ENCODE measurements at regions of chr19 and their contacts with region 1.

Region 1: DNA sequence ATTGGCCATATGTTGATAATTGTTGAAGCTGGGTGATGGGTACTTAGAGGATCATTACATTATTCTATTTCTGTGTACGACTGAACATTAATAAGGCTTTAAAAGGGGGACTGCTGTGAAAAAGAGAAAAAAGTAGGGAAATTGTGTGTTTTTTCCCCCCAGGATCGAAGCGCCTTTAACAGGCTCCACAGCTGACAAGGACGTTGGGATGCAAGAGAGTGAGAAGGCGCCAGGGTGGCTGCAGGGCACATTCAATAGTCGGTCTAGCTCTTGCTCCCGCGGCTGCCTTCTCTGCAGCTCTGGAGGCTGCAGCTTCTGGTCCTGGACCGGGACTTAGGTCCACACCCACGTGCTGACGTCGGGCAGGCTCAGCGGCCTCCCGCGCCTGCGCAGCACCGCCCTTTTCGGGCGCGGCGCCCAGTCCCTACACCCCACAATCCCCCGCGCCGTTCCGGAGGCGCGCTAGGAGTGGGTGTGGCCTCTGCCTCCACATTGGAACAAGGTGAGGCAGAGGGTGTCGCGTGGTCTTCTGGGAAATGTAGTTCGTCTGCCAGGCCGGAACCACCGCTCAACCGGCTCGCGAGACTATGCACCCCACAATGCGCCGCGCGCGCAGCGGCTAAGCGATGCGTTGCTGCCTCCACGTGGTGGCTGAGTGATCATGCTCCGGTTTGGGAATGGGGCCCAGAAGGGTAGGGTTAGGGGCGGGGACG is 4.9 kb upstream of the LRFN3 start:
- DNase-seq: peak; percentile 100
- H3K4me3 Mint-ChIP-seq: peak overlapping the region; percentile 70
- H3K27ac Mint-ChIP-seq: peak overlapping the region; percentile 81
- H3K4me1 Mint-ChIP-seq: peaks cover 30% of the 10 kb centered on the region
- H3K27me3 Mint-ChIP-seq: no peaks in the 10 kb centered on the region

Region 2: GRCh38 chr19:35693830-35694599 is 237.3 kb before region 1 on chr19:
- intact Hi-C with region 1: loop called (anchors 1 kb)
- DNase-seq: peak; percentile 86
- H3K4me3 Mint-ChIP-seq: no peak overlapping the region
- H3K27ac Mint-ChIP-seq: peak overlapping the region; percentile 38
- H3K4me1 Mint-ChIP-seq: peaks cover 27% of the 10 kb centered on the region
- H3K27me3 Mint-ChIP-seq: no peaks in the 10 kb centered on the region

Region 3: DNA sequence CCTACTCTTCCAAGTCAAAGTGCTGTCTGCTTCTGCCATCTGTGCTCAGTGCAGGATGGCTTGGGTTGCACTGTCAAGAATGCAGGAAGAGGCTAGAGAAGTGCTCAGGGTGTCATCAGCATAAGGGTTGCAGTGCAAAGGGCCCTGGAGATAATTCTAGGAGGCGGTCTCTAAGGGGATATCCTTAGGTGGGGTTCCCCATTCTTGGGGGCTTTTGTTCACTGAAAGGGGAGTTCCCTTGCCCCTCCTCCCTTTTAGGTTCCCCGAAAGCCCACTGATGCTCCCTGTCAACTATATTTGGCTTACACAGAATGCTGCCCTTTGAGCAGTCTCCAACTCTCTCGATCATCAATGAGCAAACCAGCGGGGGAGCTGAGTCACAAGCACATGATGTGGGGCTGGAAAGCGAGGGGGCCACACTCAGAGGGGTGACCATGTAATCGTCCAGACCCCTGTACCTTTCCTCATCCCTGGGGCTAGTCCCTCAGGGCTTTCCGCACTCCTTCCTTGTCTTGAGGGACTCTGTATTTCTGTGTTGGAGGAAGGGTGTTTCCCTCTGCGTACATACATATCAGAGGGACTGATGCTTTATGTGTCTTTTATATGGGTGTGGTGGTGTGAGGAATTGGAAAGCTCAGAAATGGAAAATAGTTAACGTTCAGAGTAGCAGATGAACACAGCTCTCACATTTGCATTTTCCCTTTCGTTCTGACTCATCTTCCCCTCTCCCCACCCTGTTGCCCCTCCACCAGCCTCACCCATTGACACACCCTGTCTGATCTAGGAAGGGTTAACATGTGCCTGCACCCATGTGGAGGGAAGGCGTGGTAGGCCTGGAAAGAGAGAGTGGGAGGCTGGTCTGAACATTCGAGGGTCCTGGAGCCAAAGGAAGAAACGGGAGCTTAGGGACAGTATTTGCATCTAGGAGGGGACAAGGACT is 220.3 kb before region 1 on chr19:
- intact Hi-C with region 1: loop called (anchors 1 kb)
- DNase-seq: peak; percentile 63
- H3K4me3 Mint-ChIP-seq: peak overlapping the region; percentile 63
- H3K27ac Mint-ChIP-seq: peak overlapping the region; percentile 95
- H3K4me1 Mint-ChIP-seq: peaks cover 46% of the 10 kb centered on the region
- H3K27me3 Mint-ChIP-seq: no peaks in the 10 kb centered on the region

Region 4: DNA sequence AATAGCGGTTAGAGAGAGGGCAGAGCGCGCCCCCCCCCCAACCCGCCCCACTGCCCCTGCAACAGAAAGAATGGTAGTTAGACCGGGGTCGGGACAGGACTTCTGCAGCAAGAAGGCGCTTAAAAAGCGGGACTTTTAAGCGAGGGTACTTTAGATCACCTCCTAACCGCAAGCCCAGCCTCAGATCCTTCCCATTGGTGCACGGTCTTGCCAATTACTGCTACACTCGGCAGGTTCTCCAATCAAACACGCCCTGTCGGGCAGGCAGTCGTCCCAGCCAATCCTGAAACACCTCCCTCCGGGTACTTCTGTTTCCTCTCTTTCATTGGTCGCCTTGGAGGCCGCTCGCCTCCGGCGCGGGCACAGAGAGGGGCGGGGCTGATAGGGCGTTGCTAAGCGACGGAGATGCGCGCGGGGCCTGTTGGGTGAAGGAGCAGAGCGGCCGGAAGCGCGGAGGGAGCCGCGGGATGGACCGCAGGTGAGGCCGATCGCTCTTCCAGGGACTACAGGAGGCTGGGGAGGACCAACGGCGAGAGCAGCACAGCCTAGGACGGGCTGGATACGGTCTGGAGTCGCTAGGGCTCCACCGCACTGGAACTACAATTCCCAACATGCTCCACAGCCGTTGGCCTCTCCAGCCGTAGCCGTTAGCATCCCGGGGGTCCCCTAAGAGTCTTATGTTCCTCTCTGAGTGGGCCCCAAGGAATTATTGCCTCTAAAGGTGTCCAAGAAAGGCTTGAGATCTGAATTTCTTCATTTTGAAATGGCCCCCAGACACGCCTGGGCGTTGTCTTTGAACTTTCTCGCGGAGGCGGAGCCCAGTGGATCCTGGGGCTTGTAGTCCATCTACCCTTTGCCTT is 173.3 kb before region 1 on chr19 and contains the start of gene PROSER3:
- intact Hi-C with region 1: loop called (anchors 1 kb)
- DNase-seq: peak; percentile 99
- H3K4me3 Mint-ChIP-seq: peak within 1 kb of the TSS; percentile 89
- H3K27ac Mint-ChIP-seq: peak within 1 kb of the TSS; percentile 90
- H3K4me1 Mint-ChIP-seq: peaks cover 29% of the 10 kb centered on the region
- H3K27me3 Mint-ChIP-seq: no peaks in the 10 kb centered on the region
- total RNA-seq, gene PROSER3: 39.5 and 45.1 TPM in 2 replicates

Region 5: DNA sequence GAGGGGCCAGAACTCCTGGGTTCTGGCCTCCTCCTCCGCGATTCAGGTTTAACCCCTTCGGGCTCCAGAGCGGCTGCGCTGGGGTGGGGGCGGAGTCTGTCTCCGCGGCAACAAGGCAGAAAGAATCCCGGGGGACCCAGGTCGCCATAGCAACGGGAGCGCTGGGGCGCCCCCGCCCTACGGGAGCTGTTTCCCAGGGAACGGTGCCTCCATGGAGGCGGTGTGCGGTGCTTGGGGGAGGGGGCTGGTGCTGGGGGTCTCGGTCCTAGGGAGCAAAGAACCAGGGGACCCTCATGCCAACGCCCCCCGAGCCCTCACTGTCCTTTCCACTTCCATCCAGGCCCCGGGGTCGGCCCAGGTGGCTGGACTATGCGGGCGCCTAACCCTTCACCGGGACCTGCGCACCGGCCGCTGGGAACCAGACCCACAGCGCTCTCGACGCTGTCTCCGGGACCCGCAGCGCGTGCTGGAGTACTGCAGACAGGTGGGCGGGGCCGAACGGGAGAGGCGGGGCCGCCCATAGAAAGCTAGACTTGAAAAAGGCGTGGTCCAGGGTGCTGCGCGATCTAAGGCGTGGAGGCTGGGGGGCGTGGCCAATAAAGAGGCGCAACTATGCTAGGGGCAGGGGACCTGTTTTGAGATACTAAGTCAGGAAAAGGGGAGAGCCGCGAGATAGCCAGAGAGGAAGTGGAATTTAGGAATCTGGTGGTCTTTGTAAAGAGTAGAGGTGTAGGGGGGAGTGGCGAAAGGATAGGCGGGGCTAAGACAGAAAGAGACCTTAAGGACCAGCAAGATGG is 61.8 kb before region 1 on chr19:
- intact Hi-C with region 1: loop called (anchors 1 kb)
- DNase-seq: peak; percentile 85
- H3K4me3 Mint-ChIP-seq: peak overlapping the region; percentile 81
- H3K27ac Mint-ChIP-seq: peak overlapping the region; percentile 42
- H3K4me1 Mint-ChIP-seq: peaks cover 23% of the 10 kb centered on the region
- H3K27me3 Mint-ChIP-seq: peaks cover 26% of the 10 kb centered on the region

Measured in activated T-helper 1 cell treated with anti-CD3 and anti-CD28 coated beads, Interleukin-12 subunit alpha, Interleukin-12 subunit beta, Interleukin-2, Interleukin-4 antibody, amounts not matched to agents 30 ng/mL and 10 ng/mL and 1 ng/mL, durations not matched to agents 14 hours and 24 hours and 36 hours (primary cell).